ENCODE measurements at regions of chr1 and their contacts with region 1.

Region 1: GRCh38 chr1:160078512-160079195 is 2.7 kb upstream of the KCNJ9 start:
- DNase-seq: no peak
- H3K4me3 ChIP-seq: no peak overlapping the region
- CTCF ChIP-seq: peak; percentile 77

Region 2: GRCh38 chr1:160046494-160047110 is 32.1 kb before region 1 on chr1:
- CTCF ChIA-PET with region 1: interaction called, 94 read pairs
- POLR2A ChIA-PET with region 1: no interaction called
- DNase-seq: no peak
- H3K4me3 ChIP-seq: peak overlapping the region; percentile 15; the same call in 1 of the 2 replicates
- CTCF ChIP-seq: peak; percentile 39

Region 3: DNA sequence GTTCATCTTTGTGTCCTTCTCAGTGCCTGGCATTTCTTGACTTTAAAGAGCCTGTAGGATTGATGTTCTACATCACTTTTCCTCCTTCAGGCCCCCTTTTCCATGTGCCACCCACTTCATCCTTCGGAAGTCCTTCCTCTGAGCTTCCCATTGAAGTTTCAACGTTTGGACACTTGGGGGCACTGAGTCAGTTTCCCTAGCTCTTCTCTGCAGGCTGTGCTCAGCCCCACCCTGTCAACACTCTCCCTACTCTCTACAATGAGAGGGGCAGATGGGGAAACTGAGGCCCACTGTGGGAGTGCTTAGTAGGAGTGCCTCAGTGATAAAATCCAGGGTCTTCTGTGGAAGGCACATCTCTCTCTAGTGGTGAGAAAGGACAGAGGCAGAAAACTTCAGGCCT is 20.6 kb before region 1 on chr1:
- CTCF ChIA-PET with region 1: interaction called, 15 read pairs
- POLR2A ChIA-PET with region 1: no interaction called
- DNase-seq: no peak
- H3K4me3 ChIP-seq: no peak overlapping the region
- CTCF ChIP-seq: peak; percentile 24

Region 4: DNA sequence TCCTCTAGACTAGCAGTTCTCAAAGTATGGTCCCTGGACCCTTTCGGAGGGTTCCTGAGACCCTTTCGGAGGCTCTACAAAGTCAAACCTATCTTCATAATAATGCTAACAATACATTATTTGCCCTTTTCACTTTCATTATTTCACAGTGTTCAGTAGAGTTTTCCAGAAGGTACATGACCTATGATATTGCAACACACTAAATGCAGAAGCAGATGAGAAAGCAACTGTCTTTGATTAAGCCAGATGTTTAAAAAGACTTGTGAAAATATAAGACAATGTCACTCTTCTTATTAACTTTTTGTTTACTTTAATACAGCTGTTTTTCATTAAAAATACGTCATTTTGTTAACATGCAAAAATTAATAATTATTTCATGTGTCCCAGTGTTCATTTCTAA is 14.5 kb before region 1 on chr1:
- CTCF ChIA-PET with region 1: interaction called, 116 read pairs
- POLR2A ChIA-PET with region 1: no interaction called
- DNase-seq: no peak
- H3K4me3 ChIP-seq: no peak overlapping the region
- CTCF ChIP-seq: no peak

Region 5: GRCh38 chr1:160093624-160094290 is 15.1 kb after region 1 on chr1:
- CTCF ChIA-PET with region 1: interaction called, 116 read pairs
- POLR2A ChIA-PET with region 1: no interaction called
- DNase-seq: no peak
- H3K4me3 ChIP-seq: no peak overlapping the region
- CTCF ChIP-seq: no peak

Region 6: DNA sequence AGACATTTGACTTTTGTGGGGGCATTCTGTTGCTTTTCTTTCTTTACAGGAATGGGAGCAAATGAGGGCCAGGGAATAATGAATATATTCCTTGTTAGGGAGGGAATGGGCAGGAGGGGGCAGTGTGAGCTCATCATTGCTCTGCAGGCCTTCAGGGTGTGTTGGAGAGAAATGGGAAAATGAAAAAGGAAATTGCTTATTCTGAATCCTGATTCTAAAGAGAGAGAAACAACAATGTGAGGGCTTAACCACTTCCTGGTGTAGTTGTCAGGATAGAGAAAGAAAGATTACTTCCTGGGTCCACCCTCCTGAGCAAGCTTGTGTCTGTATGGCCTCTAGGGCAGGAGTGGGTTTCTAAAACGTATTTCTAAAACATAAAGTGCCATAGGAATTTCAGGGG is 350.0 kb after region 1 on chr1:
- CTCF ChIA-PET with region 1: no interaction called
- POLR2A ChIA-PET with region 1: no interaction called
- DNase-seq: no peak
- H3K4me3 ChIP-seq: no peak overlapping the region
- CTCF ChIP-seq: peak; percentile 55